ENCODE measurements at regions of chr18 and their contacts with region 1.

Region 1: DNA sequence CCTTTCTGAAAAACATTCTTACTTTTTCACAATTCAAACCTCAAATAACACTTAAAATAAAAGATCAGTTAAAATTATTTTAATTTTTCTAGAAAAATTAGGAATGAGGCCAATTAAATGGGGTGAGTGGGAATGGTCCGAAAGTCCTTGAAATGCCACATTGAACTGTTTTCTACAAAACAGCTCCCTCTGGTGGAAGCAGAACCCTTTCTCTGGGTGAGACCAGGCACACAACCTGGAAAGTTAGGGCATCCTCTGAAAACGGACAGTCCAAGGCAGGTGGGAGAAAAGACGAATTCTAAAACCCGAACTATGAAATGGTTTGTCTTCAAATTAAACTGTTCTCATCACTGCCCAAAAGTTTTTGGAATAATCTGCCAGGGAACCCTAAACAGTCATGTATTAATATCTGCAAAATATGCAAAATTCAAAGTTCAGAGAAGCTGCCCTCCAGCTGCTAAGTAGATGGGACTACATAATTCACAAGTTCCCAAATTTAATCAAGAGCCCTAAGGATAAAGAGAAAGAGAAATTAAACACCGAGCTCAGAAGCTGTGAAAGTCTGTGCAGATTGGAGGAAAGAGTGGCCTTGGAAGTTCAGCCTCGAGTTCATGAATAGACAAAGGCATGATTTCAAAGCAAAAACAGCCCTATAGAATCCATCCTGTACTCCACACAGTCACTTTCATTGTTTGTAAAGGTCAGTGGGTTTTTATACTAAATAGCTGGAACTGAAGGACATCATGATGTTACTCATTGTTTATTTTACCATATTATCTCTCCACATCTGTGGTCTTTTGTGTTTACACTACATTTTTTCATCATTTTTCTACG is 108.3 kb downstream of the PIEZO2 start:
- DNase-seq: peak; percentile 56
- H3K4me3 ChIP-seq: no peak overlapping the region
- H3K27ac ChIP-seq: no peak overlapping the region
- H3K4me1 ChIP-seq: no peaks in the 10 kb centered on the region
- H3K27me3 ChIP-seq: peaks cover 10% of the 10 kb centered on the region
- CTCF ChIP-seq: peak; percentile 81

Region 2: GRCh38 chr18:10482985-10483949 is 557.8 kb before region 1 on chr18:
- CTCF ChIA-PET with region 1: no interaction called
- POLR2A ChIA-PET with region 1: no interaction called
- intact Hi-C with region 1: no loop called
- DNase-seq: no peak
- H3K4me3 ChIP-seq: no peak overlapping the region
- H3K27ac ChIP-seq: peak overlapping the region; percentile 48
- H3K4me1 ChIP-seq: peaks cover 60% of the 10 kb centered on the region
- H3K27me3 ChIP-seq: no peaks in the 10 kb centered on the region
- CTCF ChIP-seq: no peak

Region 3: DNA sequence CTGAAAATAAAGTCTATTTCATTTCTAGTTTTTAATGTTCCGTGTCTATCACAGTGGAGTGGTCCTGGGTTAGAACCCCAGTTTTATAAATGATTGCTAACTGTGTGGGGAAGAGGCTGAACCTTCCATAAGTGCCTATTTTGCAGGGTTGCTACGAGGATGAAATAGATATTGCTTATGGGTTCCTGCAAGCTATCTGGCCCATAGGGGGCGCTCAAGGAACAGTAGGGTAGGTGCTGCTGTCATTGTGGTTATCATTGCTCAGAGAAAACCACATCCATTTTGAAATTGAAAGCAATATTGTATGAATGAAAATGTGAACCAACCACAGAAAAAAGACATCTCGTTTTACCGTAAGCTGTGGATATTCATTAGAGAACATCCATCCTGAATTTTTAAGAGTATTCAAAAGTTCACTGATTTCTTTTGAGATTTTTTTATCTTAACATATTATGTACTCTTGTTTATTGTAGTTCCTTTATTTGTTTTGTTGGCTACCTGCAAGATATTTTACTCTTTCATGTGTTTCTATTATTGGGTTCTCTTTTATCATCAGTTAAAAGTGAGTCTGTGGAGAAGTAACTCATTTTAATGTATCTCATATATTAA is 253.6 kb before region 1 on chr18:
- CTCF ChIA-PET with region 1: interaction called, 4 read pairs
- POLR2A ChIA-PET with region 1: no interaction called
- intact Hi-C with region 1: loop called (anchors 2 kb)
- DNase-seq: peak; percentile 86
- H3K4me3 ChIP-seq: no peak overlapping the region
- H3K27ac ChIP-seq: no peak overlapping the region
- H3K4me1 ChIP-seq: no peaks in the 10 kb centered on the region
- H3K27me3 ChIP-seq: peaks cover 13% of the 10 kb centered on the region
- CTCF ChIP-seq: peak; percentile 93

Region 4: GRCh38 chr18:10851824-10852319 is 189.2 kb before region 1 on chr18:
- CTCF ChIA-PET with region 1: interaction called, 9 read pairs
- POLR2A ChIA-PET with region 1: no interaction called
- intact Hi-C with region 1: loop called (anchors 2 kb)
- DNase-seq: peak; percentile 77
- H3K4me3 ChIP-seq: no peak overlapping the region
- H3K27ac ChIP-seq: no peak overlapping the region
- H3K4me1 ChIP-seq: no peaks in the 10 kb centered on the region
- H3K27me3 ChIP-seq: peaks cover 27% of the 10 kb centered on the region
- CTCF ChIP-seq: peak; percentile 81